Transverse colon (tissue), 4 donors: ENCODE measurements at regions of chr2 and their contacts with region 1.

Region 1: DNA sequence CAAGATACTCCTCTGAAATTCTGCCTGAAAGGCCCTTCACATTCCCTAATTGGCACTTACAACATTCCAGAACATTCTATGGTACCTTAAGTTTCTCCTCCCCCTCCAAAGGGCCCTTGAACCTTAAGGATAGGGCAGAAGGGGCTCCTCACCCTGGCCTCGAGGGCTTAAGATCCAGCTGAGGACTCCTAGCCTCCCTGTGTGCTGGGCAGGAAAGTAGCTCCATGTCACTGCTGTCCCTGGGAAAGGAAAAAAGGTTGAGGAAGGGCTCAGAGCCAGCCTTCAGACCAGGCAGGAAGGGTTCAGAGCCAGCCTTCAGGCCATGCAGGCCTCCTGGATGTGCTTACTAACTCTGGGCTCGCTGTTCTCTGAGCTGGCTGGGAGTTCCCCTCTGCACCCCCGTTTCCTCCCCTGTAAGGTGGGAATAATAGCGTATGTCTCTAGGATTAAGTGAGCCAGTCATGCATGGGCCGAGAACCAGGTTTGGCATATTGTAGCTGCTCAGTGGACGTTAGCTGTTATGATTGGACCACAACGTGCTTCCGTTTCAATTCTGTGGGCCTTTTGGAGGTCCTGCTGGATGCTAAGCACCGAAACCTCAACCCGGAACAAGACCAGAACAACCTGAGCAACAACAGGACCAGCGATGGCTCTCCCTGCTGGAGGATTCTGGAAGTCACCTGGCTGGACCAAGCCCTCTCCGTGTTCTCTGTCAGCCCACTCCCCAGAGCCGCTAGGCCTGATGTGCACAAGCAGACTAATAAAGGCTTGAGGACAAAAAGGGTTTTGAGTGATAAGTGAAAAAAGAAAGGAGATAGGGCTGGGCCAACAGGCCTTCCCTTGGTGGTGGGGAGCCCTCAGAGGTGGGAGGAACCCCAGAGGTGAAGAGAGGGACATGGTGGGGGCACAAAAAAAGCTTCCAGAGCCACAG is 1.0 kb upstream of the B3GNT7 start:
- DNase-seq: no peak
- H3K4me3 ChIP-seq: peak overlapping the region in 3 of 4 donors; percentile 74 to 89 (median 88)
- H3K27ac ChIP-seq: peak overlapping the region in 3 of 4 donors; percentile 81 to 88 (median 87)
- H3K4me1 ChIP-seq: peaks cover 4 to 33% (median 22%) of the 10 kb centered on the region in 4 donors
- H3K27me3 ChIP-seq: peaks cover 30% of the 10 kb centered on the region
- CTCF ChIP-seq: peak in 4 of 5 experiments; percentile 27 to 63 (median 45)
- EP300 ChIP-seq: no peak
- POLR2A ChIP-seq: no peak

Region 2: GRCh38 chr2:231297108-231297908 is 97.2 kb before region 1 on chr2:
- in situ Hi-C with region 1: no loop called
- intact Hi-C with region 1: loop called (anchors 5 kb)
- DNase-seq: peak; percentile 68
- H3K4me3 ChIP-seq: no peak overlapping the region
- H3K27ac ChIP-seq: peak overlapping the region in 1 of 4 donors; percentile 24
- H3K4me1 ChIP-seq: peaks cover 0 to 30% (median 18%) of the 10 kb centered on the region in 4 donors
- H3K27me3 ChIP-seq: no peaks in the 10 kb centered on the region
- CTCF ChIP-seq: peak; percentile 59 to 80 (median 76)
- EP300 ChIP-seq: no peak
- POLR2A ChIP-seq: no peak